CD4-positive, alpha-beta T cell (primary cell): ENCODE measurements at regions of chrX and their contacts with region 1.

Region 1: GRCh38 chrX:136652822-136653723 is 5.1 kb downstream of the CD40LG start:
- DNase-seq: peak in 6 of 14 experiments; percentile 11 to 44 (median 29)
- ATAC-seq: peak; percentile 50
- H3K4me3 ChIP-seq: peak overlapping the region; percentile 80
- H3K4me3 Mint-ChIP-seq: peak overlapping the region; percentile 99
- H3K27ac ChIP-seq: peak overlapping the region; percentile 58 to 67
- H3K27ac Mint-ChIP-seq: peak overlapping the region; percentile 92
- H3K4me1 ChIP-seq: peaks cover 38% of the 10 kb centered on the region
- H3K4me1 Mint-ChIP-seq: peaks cover 69% of the 10 kb centered on the region
- H3K27me3 ChIP-seq: no peaks in the 10 kb centered on the region
- H3K27me3 Mint-ChIP-seq: no peaks in the 10 kb centered on the region
- CTCF ChIP-seq: no peak

Region 2: DNA sequence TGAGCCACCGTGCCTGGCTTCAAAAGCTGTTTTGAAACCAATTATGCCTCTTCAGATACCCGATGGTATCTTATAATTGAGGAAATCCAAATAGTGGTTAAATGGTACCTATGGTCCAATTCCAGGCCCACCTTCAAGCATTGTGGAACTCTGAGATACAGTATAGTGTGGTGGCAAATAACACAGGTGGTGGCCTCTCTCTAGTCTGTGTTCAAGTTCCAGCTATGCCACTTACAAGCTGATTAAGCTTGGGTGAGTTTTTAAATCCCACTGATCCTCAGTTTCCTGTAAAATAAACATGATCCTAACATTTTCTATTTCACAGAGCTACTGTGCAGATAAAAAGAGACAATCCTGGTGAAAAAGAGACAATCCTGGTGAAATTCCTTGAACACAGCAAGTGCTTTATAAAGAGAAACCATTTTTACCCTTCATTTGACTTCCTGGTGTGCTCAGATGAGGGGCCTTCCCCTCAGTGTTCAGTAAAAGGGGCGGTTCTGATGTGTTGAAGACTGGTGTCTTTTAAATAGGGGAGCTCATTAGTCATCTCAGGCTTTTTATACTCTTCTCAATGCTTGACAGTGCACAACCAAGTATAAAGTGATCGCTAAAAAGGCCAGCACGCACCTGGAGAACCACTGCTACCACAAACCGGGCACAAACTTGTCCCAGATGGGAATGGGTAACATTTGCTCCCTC is 35.9 kb before region 1 on chrX:
- CTCF ChIA-PET with region 1: no interaction called
- POLR2A ChIA-PET with region 1: interaction called, 17 read pairs
- intact Hi-C with region 1: loop called in 1 of 2 experiments (anchors 5 kb)
- DNase-seq: peak in 5 of 14 experiments; percentile 14 to 72 (median 63)
- ATAC-seq: peak; percentile 85
- H3K4me3 ChIP-seq: no peak overlapping the region
- H3K4me3 Mint-ChIP-seq: peak overlapping the region; percentile 75
- H3K27ac ChIP-seq: peak overlapping the region; percentile 29 to 58
- H3K27ac Mint-ChIP-seq: peak overlapping the region; percentile 86
- H3K4me1 ChIP-seq: peaks cover 57% of the 10 kb centered on the region
- H3K4me1 Mint-ChIP-seq: peaks cover 64% of the 10 kb centered on the region
- H3K27me3 ChIP-seq: no peaks in the 10 kb centered on the region
- H3K27me3 Mint-ChIP-seq: no peaks in the 10 kb centered on the region
- CTCF ChIP-seq: no peak

Region 3: GRCh38 chrX:136626237-136626636 is 26.8 kb before region 1 on chrX:
- CTCF ChIA-PET with region 1: interaction called, 3 read pairs
- POLR2A ChIA-PET with region 1: interaction called, 70 read pairs
- intact Hi-C with region 1: no loop called
- DNase-seq: no peak
- ATAC-seq: no peak
- H3K4me3 ChIP-seq: no peak overlapping the region
- H3K4me3 Mint-ChIP-seq: peak overlapping the region; percentile 31
- H3K27ac ChIP-seq: peak overlapping the region in 1 of 2 donors; percentile 62
- H3K27ac Mint-ChIP-seq: peak overlapping the region; percentile 69
- H3K4me1 ChIP-seq: peaks cover 66% of the 10 kb centered on the region
- H3K4me1 Mint-ChIP-seq: peaks cover 98% of the 10 kb centered on the region
- H3K27me3 ChIP-seq: no peaks in the 10 kb centered on the region
- H3K27me3 Mint-ChIP-seq: no peaks in the 10 kb centered on the region
- CTCF ChIP-seq: no peak

Region 4: DNA sequence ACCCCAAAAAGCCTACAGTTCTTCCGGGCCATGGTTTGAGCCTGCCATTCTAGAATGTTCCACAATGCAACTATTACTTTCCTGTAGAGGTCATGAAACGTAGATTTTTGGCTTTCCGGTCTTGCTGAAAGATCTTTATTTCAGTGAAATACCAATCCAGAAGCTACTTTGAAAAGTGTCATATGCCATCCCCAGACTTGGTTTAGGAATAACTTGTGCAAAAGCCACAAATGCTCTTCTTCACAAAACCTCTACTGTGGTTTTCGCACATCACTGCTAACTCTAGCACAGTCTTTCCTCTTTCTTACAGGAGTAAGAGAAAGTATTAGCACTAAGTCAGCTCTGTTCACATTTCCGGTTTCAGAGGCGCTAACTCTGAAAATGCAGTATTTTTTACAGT is 17.8 kb before region 1 on chrX:
- CTCF ChIA-PET with region 1: no interaction called
- POLR2A ChIA-PET with region 1: interaction called, 85 read pairs
- intact Hi-C with region 1: loop called in 1 of 2 experiments (anchors 2 kb)
- DNase-seq: peak in 4 of 14 experiments; percentile 28 to 76 (median 70)
- ATAC-seq: peak; percentile 80
- H3K4me3 ChIP-seq: peak overlapping the region; percentile 27
- H3K4me3 Mint-ChIP-seq: peak overlapping the region; percentile 58
- H3K27ac ChIP-seq: peak overlapping the region; percentile 39 to 47
- H3K27ac Mint-ChIP-seq: peak overlapping the region; percentile 88
- H3K4me1 ChIP-seq: peaks cover 83% of the 10 kb centered on the region
- H3K4me1 Mint-ChIP-seq: peaks cover 88% of the 10 kb centered on the region
- H3K27me3 ChIP-seq: no peaks in the 10 kb centered on the region
- H3K27me3 Mint-ChIP-seq: no peaks in the 10 kb centered on the region
- CTCF ChIP-seq: no peak

Region 5: GRCh38 chrX:136665258-136665900 is 12.3 kb after region 1 on chrX:
- CTCF ChIA-PET with region 1: no interaction called
- POLR2A ChIA-PET with region 1: interaction called, 72 read pairs
- intact Hi-C with region 1: no loop called
- DNase-seq: no peak
- ATAC-seq: no peak
- H3K4me3 ChIP-seq: no peak overlapping the region
- H3K4me3 Mint-ChIP-seq: no peak overlapping the region
- H3K27ac ChIP-seq: no peak overlapping the region
- H3K27ac Mint-ChIP-seq: peak overlapping the region; percentile 83
- H3K4me1 ChIP-seq: peaks cover 82% of the 10 kb centered on the region
- H3K4me1 Mint-ChIP-seq: peaks cover 89% of the 10 kb centered on the region
- H3K27me3 ChIP-seq: no peaks in the 10 kb centered on the region
- H3K27me3 Mint-ChIP-seq: no peaks in the 10 kb centered on the region
- CTCF ChIP-seq: no peak

Region 6: GRCh38 chrX:137587151-137587550 is 934.1 kb after region 1 on chrX:
- CTCF ChIA-PET with region 1: no interaction called
- POLR2A ChIA-PET with region 1: no interaction called
- intact Hi-C with region 1: no loop called
- DNase-seq: no peak
- ATAC-seq: no peak
- H3K4me3 ChIP-seq: no peak overlapping the region
- H3K4me3 Mint-ChIP-seq: no peak overlapping the region
- H3K27ac ChIP-seq: no peak overlapping the region
- H3K27ac Mint-ChIP-seq: no peak overlapping the region
- H3K4me1 ChIP-seq: no peaks in the 10 kb centered on the region
- H3K4me1 Mint-ChIP-seq: no peaks in the 10 kb centered on the region
- H3K27me3 ChIP-seq: no peaks in the 10 kb centered on the region
- H3K27me3 Mint-ChIP-seq: peaks cover 19% of the 10 kb centered on the region
- CTCF ChIP-seq: no peak